Sigmoid colon (tissue), 7 donors: ENCODE measurements at regions of chr19 and their contacts with region 1.

Region 1: GRCh38 chr19:20051841-20052768 is 12.8 kb upstream of the ZNF682 start:
- DNase-seq: peak; percentile 98
- H3K4me3 ChIP-seq: peak overlapping the region; percentile 56 to 69 (median 64)
- H3K27ac ChIP-seq: peak overlapping the region; percentile 76 to 81 (median 80)
- H3K4me1 ChIP-seq: peaks cover 0 to 14% (median 6%) of the 10 kb centered on the region in 4 donors
- H3K27me3 ChIP-seq: no peaks in the 10 kb centered on the region
- CTCF ChIP-seq: no peak
- EP300 ChIP-seq: no peak
- POLR2A ChIP-seq: no peak

Region 2: DNA sequence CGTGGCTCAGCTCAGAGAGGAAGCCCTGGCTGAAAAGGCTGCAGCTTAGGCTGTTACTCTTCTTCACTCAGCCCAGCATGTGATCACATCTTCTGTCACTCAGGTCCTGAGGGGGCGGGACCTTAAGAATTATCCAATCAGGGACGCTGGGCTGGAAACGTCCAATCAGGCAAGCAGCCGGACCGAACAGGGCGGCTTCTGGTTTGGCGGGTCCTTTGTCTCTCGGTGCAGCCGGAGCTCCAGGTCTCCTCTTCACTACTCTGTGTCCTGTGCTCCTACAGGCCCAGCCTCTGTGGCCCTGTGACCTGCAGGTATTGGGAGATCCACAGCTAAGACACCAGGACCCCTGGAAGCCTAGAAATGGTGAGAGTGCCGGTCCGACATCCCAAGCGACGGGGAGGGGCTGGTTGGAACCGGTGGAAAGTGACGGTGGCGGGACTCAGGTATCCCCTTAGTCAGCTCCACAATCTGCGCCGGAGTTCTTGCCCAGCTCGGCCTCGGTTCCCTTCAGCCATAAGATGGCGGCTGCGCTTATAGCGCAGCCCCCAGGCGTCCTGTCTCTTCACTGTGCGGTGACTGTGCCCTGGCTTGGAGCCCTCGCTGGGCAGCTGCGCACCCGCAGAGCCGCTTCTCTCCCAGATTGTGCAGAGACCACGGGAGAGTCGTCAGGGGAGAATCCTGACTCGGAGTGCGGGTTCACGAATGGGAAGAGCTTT is 151.2 kb before region 1 on chr19 and contains the start of gene ZNF93:
- intact Hi-C with region 1: loop called (anchors 10 kb)
- DNase-seq: peak; percentile 98
- H3K4me3 ChIP-seq: peak within 1 kb of the TSS; percentile 54 to 85 (median 69)
- H3K27ac ChIP-seq: peak within 1 kb of the TSS; percentile 83 to 99 (median 88)
- H3K4me1 ChIP-seq: peaks cover 0 to 23% (median 6%) of the 10 kb centered on the region in 4 donors
- H3K27me3 ChIP-seq: no peaks in the 10 kb centered on the region
- CTCF ChIP-seq: no peak
- EP300 ChIP-seq: no peak
- POLR2A ChIP-seq: peak; percentile 27 to 63
- total RNA-seq, gene ZNF93: 5.1 to 14.4 (median 6.7) TPM

Region 3: DNA sequence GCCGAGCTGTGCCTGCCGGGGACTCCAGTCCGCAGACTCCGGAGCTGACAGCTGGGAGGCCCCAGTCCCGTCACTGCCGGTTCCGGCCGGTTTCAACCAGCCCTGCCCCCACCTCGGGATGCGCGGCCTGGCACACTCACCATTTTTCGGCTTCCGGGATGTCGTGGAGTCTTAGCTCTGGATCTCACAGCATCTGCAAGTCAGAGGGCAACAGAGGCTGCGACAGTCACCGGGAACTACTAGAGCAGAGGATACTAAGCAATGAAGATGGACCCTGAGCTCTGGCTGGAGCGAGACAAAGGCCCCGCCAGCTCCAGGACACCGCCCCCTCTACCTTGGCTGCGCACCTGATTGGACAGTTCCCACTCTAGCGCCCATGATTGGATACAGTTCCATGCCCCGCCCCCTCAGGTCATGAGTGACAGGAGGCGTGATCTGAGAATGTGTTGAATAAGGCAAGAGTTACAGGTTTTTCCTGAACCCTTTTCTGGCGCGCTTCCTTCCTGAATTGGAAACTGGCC is 12.8 kb before region 1 on chr19 and contains the start of gene ZNF682:
- intact Hi-C with region 1: loop called (anchors 2 kb)
- DNase-seq: peak; percentile 97
- H3K4me3 ChIP-seq: peak within 1 kb of the TSS; percentile 58 to 83 (median 70)
- H3K27ac ChIP-seq: peak within 1 kb of the TSS; percentile 65 to 83 (median 71)
- H3K4me1 ChIP-seq: peaks cover 0 to 12% (median 8%) of the 10 kb centered on the region in 4 donors
- H3K27me3 ChIP-seq: no peaks in the 10 kb centered on the region
- CTCF ChIP-seq: no peak
- EP300 ChIP-seq: peak in 1 of 4 donors; percentile 62
- POLR2A ChIP-seq: no peak
- total RNA-seq, gene ZNF682: 1.8 to 3.0 (median 2.1) TPM

Region 4: GRCh38 chr19:20077791-20078463 is 25.8 kb after region 1 on chr19 and contains the start of gene ZNF90:
- intact Hi-C with region 1: loop called (anchors 2 kb)
- DNase-seq: peak; percentile 99
- H3K4me3 ChIP-seq: peak within 1 kb of the TSS; percentile 36 to 63 (median 53)
- H3K27ac ChIP-seq: peak within 1 kb of the TSS; percentile 63 to 77 (median 67)
- H3K4me1 ChIP-seq: peaks cover 0 to 20% (median 9%) of the 10 kb centered on the region in 4 donors
- H3K27me3 ChIP-seq: no peaks in the 10 kb centered on the region
- CTCF ChIP-seq: no peak
- EP300 ChIP-seq: no peak
- POLR2A ChIP-seq: no peak
- total RNA-seq, gene ZNF90: 2.8 to 4.6 (median 3.6) TPM

Region 5: GRCh38 chr19:20103091-20103740 is 51.1 kb after region 1 on chr19:
- intact Hi-C with region 1: no loop called
- DNase-seq: no peak
- H3K4me3 ChIP-seq: no peak overlapping the region
- H3K27ac ChIP-seq: no peak overlapping the region
- H3K4me1 ChIP-seq: no peaks in the 10 kb centered on the region
- H3K27me3 ChIP-seq: no peaks in the 10 kb centered on the region
- CTCF ChIP-seq: no peak
- EP300 ChIP-seq: no peak
- POLR2A ChIP-seq: no peak

Region 6: GRCh38 chr19:20367811-20368294 is 315.7 kb after region 1 on chr19:
- intact Hi-C with region 1: no loop called
- DNase-seq: no peak
- H3K4me3 ChIP-seq: no peak overlapping the region
- H3K27ac ChIP-seq: no peak overlapping the region
- H3K4me1 ChIP-seq: peaks cover 0 to 9% (median 3%) of the 10 kb centered on the region in 4 donors
- H3K27me3 ChIP-seq: no peaks in the 10 kb centered on the region
- CTCF ChIP-seq: no peak
- EP300 ChIP-seq: no peak
- POLR2A ChIP-seq: no peak

Region 7: GRCh38 chr19:20423381-20424197 is 371.5 kb after region 1 on chr19:
- intact Hi-C with region 1: loop called (anchors 10 kb)
- DNase-seq: peak; percentile 83
- H3K4me3 ChIP-seq: peak overlapping the region; percentile 57 to 69 (median 63)
- H3K27ac ChIP-seq: peak overlapping the region; percentile 84 to 90 (median 88)
- H3K4me1 ChIP-seq: peaks cover 0 to 13% (median 2%) of the 10 kb centered on the region in 4 donors
- H3K27me3 ChIP-seq: no peaks in the 10 kb centered on the region
- CTCF ChIP-seq: no peak
- EP300 ChIP-seq: no peak
- POLR2A ChIP-seq: no peak